ENCODE measurements at regions of chr5 and their contacts with region 1.

Region 1: DNA sequence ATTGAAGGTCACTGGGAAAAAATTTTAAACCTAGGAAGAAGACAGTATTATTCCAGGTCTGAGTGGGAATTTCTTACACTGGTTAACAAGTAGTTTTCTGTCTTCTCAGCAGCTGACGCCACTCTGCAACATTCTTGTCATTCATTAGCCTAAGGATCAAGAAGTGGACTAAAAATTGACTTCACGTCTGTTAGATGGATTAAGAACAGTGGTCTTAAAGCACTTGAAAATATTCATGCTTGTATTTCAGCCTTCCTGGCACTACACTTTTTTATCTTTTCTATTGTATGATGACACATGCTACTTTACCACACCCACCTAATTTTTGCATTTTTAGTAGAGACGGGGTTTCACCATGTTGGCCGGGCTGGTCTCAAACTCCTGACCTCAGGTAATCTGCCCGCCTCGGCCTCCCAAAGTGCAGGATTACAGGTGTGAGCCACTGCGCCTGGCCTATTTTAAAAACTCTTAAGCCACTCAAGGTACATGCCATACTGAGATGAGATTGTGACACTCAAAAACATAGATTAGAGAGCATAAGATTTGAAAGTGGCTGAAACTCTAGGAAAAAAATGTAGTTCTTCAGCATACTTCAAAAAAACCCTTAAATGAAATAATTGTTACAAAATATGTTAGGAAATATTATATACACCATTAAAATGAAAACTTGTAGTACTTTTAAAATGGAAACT is 8.4 kb downstream of the MATR3 start:
- DNase-seq: no peak
- ATAC-seq: peak; percentile 32
- H3K4me3 Mint-ChIP-seq: peak overlapping the region; percentile 34
- H3K27ac Mint-ChIP-seq: peak overlapping the region; percentile 81
- H3K4me1 Mint-ChIP-seq: peaks cover 85% of the 10 kb centered on the region
- H3K27me3 Mint-ChIP-seq: no peaks in the 10 kb centered on the region
- CTCF ChIP-seq: no peak

Region 2: GRCh38 chr5:139312075-139312474 is 10.1 kb after region 1 on chr5:
- CTCF ChIA-PET with region 1: interaction called, 4 read pairs
- POLR2A ChIA-PET with region 1: interaction called, 84 read pairs
- intact Hi-C with region 1: no loop called
- DNase-seq: no peak
- ATAC-seq: no peak
- H3K4me3 Mint-ChIP-seq: no peak overlapping the region
- H3K27ac Mint-ChIP-seq: no peak overlapping the region
- H3K4me1 Mint-ChIP-seq: peaks cover 62% of the 10 kb centered on the region
- H3K27me3 Mint-ChIP-seq: no peaks in the 10 kb centered on the region
- CTCF ChIP-seq: no peak

Region 3: DNA sequence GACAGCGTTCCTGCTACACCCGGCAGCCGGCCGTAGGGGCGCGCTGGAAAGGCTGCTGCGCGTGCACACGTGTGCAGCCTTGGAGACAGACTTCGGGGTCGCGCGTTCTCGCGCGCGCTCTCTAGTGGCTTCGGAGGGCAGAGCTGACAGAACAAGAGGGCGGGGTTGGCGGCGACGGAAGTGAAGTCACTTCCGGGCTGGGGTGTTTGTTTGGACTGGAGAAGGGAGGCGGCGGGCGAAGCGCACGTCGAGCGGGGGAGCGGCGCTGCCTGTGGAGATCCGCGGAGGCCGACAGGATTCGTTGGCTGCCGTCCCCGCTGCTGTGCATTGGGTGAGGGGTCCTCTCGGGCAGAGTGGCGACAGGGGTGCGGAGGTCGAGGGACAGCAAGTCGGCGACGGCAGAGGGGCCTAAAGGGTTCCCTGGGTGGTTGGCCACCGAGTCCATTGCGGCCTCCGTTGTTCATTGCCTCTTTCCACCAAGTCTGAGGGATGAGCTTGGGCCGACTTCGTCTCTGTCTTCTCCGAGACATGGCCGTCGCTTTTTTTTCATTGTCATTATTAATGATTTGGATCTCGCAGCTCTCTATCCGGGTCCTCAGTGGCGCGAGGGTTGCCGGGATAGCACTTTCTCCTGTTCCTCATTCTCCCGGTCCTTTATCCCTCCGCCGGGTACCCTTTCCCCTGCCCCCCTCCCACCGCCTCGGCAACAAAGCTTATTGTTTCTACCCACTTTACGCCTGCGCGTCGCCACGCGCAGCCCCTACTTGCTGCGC is 39.9 kb after region 1 on chr5 and contains the start of gene PAIP2:
- CTCF ChIA-PET with region 1: interaction called, 8 read pairs
- POLR2A ChIA-PET with region 1: interaction called, 12 read pairs
- intact Hi-C with region 1: loop called (anchors 2 kb)
- DNase-seq: peak; percentile 99
- ATAC-seq: peak; percentile 90
- H3K4me3 Mint-ChIP-seq: peak within 1 kb of the TSS; percentile 89
- H3K27ac Mint-ChIP-seq: peak within 1 kb of the TSS; percentile 95
- H3K4me1 Mint-ChIP-seq: peaks cover 39% of the 10 kb centered on the region
- H3K27me3 Mint-ChIP-seq: no peaks in the 10 kb centered on the region
- CTCF ChIP-seq: peak; percentile 70
- total RNA-seq, gene PAIP2: 110 to 113 TPM